ENCODE measurements at regions of chr2 and their contacts with region 1.

Region 1: DNA sequence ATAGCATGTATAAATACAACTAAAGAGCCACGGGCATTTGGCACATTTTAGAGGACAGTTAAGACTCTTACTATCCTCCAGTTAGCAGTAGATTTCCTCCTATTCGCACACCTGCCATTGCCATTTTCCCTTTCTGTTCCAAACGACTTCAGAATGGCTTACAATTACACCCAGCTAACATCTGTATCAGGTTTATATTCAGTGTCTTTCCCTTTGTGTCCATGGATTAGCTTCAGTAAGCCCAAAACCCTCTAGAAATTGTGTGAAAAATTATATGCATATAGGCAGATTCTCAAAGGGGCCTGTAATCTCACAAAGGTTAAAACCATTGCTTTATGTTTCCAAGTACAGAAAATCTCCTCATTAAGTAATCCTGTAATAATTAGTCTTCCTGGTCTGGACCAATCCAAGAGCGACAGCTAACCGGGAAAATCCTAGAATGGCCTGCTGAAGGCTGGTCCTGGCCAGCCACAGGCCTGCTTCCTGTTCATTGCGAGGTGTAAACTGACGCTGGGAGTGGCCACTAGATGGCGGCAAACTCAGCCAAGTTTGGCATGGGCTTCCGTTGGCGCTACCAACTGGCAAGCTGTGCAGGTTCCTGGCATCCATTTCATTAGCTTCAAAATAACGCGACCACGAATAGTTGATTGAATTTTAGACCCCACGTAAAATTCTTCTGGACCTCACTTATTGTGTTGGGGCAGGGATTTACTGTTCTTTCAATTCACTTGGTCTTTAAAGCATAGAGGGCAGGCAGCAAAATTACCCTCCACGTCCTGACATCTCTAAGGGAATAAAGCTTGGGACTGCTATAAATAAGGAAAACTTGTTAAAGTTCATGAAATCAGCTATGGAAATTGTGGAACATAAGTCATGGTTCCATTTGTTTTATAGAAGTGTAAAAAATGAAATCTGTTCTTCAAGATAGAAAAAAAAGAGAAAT is 17.1 kb downstream of the ARHGAP25 start:
- DNase-seq: peak; percentile 89 to 92 (median 91)
- ATAC-seq: peak; percentile 71 to 97 (median 96)
- H3K4me3 ChIP-seq: peak overlapping the region in 4 of 12 donors; percentile 11 to 37 (median 26)
- H3K27ac ChIP-seq: peak overlapping the region in 1 of 12 donors; percentile 19
- H3K4me1 ChIP-seq: peaks cover 0 to 74% (median 13%) of the 10 kb centered on the region in 12 donors
- H3K27me3 ChIP-seq: no peaks in the 10 kb centered on the region
- CTCF ChIP-seq: peak; percentile 88 to 97 (median 94)
- POLR2A ChIP-seq: no peak

Region 2: GRCh38 chr2:68828887-68829708 is 77.4 kb after region 1 on chr2:
- intact Hi-C with region 1: loop called in 1 of 10 experiments (anchors 5 kb)
- DNase-seq: peak; percentile 91 to 97 (median 94)
- ATAC-seq: peak; percentile 82 to 86 (median 83)
- H3K4me3 ChIP-seq: peak overlapping the region in 9 of 12 donors; percentile 3 to 30 (median 15)
- H3K27ac ChIP-seq: peak overlapping the region; percentile 53 to 85 (median 74)
- H3K4me1 ChIP-seq: peaks cover 11 to 84% (median 44%) of the 10 kb centered on the region in 12 donors
- H3K27me3 ChIP-seq: no peaks in the 10 kb centered on the region
- CTCF ChIP-seq: peak in 1 of 12 donors; percentile 10
- POLR2A ChIP-seq: no peak

Region 3: GRCh38 chr2:68837164-68837860 is 85.6 kb after region 1 on chr2:
- intact Hi-C with region 1: loop called in 8 of 10 experiments (anchors 1 to 5 kb)
- DNase-seq: peak; percentile 68 to 81 (median 75)
- ATAC-seq: peak in 3 of 4 donors; percentile 56 to 67 (median 66)
- H3K4me3 ChIP-seq: no peak overlapping the region
- H3K27ac ChIP-seq: no peak overlapping the region
- H3K4me1 ChIP-seq: peaks cover 0 to 53% (median 9%) of the 10 kb centered on the region in 12 donors
- H3K27me3 ChIP-seq: no peaks in the 10 kb centered on the region
- CTCF ChIP-seq: peak; percentile 52 to 78 (median 67)
- POLR2A ChIP-seq: no peak

Region 4: GRCh38 chr2:68909793-68910674 is 158.4 kb after region 1 on chr2:
- intact Hi-C with region 1: loop called (anchors 1 to 5 kb)
- DNase-seq: peak in 4 of 5 donors; percentile 46 to 68 (median 63)
- ATAC-seq: peak in 3 of 4 donors; percentile 66 to 76 (median 74)
- H3K4me3 ChIP-seq: no peak overlapping the region
- H3K27ac ChIP-seq: no peak overlapping the region
- H3K4me1 ChIP-seq: peaks cover 0 to 54% (median 8%) of the 10 kb centered on the region in 12 donors
- H3K27me3 ChIP-seq: no peaks in the 10 kb centered on the region
- CTCF ChIP-seq: peak; percentile 86 to 95 (median 93)
- POLR2A ChIP-seq: no peak

Region 5: DNA sequence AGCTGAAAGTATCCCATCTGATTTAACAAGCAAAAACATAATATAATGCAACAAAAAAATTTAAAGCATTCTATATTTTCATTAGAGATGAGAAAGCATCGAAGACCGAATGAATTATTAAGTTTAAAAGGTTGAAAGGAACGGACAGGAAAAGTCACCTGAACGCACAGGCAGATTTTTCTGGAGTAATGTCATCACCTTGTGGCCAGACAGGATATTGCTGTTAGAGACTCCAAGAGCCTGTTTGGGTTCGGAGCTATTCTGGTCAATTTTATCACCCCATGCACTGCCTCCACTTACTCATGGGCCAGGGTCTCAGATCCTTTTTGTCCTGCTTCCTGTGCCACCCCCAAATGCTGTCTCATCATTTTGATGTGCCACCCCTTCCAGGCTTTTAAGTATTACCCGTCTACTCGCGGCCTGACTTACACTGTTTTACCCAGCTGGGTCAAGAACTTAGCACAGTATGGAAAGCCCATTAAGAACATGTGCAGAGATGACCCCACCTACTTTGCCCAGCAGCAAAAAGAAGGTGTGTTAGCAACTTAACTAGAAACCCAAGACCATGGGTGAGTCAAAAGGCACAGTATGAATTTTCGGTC is 173.7 kb after region 1 on chr2:
- intact Hi-C with region 1: loop called in 2 of 10 experiments (anchors 5 kb)
- DNase-seq: no peak
- ATAC-seq: peak in 3 of 4 donors; percentile 57 to 65 (median 62)
- H3K4me3 ChIP-seq: no peak overlapping the region
- H3K27ac ChIP-seq: no peak overlapping the region
- H3K4me1 ChIP-seq: no peaks in the 10 kb centered on the region
- H3K27me3 ChIP-seq: peaks cover 0 to 13% (median 0%) of the 10 kb centered on the region in 9 donors
- CTCF ChIP-seq: peak; percentile 74 to 92 (median 82)
- POLR2A ChIP-seq: no peak